Activated CD4-positive, alpha-beta memory T cell treated with anti-CD3 and anti-CD28 coated beads, Interleukin-2, amount 10 ng/mL, durations not matched to agents 7 days and 5 days (primary cell): ENCODE measurements at regions of chr19 and their contacts with region 1.

Region 1: GRCh38 chr19:55080968-55081772 is 5.5 kb downstream of the EPS8L1 start:
- DNase-seq: peak; percentile 97
- H3K4me3 Mint-ChIP-seq: peak overlapping the region; percentile 77
- H3K27ac Mint-ChIP-seq: peak overlapping the region; percentile 84
- H3K4me1 Mint-ChIP-seq: peaks cover 36% of the 10 kb centered on the region
- H3K27me3 Mint-ChIP-seq: peaks cover 43% of the 10 kb centered on the region

Region 2: GRCh38 chr19:55041617-55042349 is 39.4 kb before region 1 on chr19:
- CTCF ChIA-PET with region 1: no interaction called
- POLR2A ChIA-PET with region 1: no interaction called
- DNase-seq: peak; percentile 56
- H3K4me3 Mint-ChIP-seq: peak overlapping the region; percentile 64
- H3K27ac Mint-ChIP-seq: peak overlapping the region; percentile 94
- H3K4me1 Mint-ChIP-seq: peaks cover 25% of the 10 kb centered on the region
- H3K27me3 Mint-ChIP-seq: no peaks in the 10 kb centered on the region

Region 3: DNA sequence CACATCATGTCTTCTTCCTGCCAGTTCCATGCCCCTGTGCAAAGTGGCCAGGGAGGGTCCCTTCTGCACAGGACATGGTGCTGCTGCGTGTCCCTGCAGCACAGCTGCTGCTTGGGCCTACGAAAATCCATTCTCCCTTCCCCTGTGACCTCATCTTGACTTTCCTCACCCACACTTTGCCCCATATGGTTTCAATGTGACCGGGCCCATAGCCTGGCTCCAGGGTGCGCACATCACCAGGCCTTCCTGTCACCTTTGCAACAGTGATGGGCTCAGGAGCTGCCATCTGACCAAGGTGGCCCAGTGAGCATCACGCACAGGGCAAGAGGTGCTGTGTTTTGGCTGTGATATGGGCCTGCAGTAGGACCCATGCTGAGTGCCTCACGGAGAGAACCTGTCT is 25.4 kb after region 1 on chr19:
- CTCF ChIA-PET with region 1: no interaction called
- POLR2A ChIA-PET with region 1: no interaction called
- DNase-seq: no peak
- H3K4me3 Mint-ChIP-seq: no peak overlapping the region
- H3K27ac Mint-ChIP-seq: peak overlapping the region; percentile 29
- H3K4me1 Mint-ChIP-seq: peaks cover 4% of the 10 kb centered on the region
- H3K27me3 Mint-ChIP-seq: no peaks in the 10 kb centered on the region

Region 4: DNA sequence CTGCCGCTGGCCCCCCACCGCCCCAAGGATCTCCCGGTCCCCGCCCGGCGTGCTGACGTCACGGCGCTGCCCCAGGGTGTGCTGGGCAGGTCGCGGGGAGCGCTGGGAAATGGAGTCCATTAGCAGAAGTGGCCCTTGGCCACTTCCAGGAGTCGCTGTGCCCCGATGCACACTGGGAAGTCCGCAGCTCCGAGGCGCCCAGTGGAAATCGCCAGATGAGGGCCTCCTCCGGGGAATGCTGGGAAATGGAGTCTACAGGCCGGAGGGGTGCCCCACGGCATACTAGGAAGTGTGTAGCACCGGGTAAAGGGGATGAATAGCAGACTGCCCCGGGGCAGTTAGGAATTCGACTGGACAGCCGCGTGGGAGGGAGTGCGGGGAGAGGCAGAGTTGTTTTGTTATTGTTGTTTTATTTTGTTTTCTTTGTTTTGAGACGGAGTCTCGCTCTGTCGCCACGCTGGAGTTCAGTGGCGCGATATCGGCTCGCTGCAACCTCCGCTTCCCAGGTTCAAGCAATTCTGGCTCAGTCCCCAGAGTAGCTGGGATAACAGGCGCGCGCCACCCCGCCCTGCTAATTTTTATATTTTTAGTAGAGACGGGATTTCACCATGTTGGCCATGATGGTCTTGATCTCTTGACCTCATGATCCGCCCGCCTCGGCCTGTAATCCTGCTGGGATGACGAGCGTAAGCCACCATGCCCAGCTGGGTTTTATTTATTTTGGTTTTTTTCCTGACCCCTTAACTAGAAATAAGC is 36.6 kb after region 1 on chr19 and contains the start of gene PPP1R12C:
- CTCF ChIA-PET with region 1: no interaction called
- POLR2A ChIA-PET with region 1: interaction called, 15 read pairs
- DNase-seq: peak; percentile 98
- H3K4me3 Mint-ChIP-seq: peak within 1 kb of the TSS; percentile 93
- H3K27ac Mint-ChIP-seq: peak within 1 kb of the TSS; percentile 91
- H3K4me1 Mint-ChIP-seq: peaks cover 46% of the 10 kb centered on the region
- H3K27me3 Mint-ChIP-seq: peaks cover 9% of the 10 kb centered on the region
- total RNA-seq, gene PPP1R12C: 132 to 134 TPM

Region 5: GRCh38 chr19:55447421-55448174 is 366.4 kb after region 1 on chr19:
- CTCF ChIA-PET with region 1: no interaction called
- POLR2A ChIA-PET with region 1: no interaction called
- DNase-seq: no peak
- H3K4me3 Mint-ChIP-seq: no peak overlapping the region
- H3K27ac Mint-ChIP-seq: no peak overlapping the region
- H3K4me1 Mint-ChIP-seq: peaks cover 2% of the 10 kb centered on the region
- H3K27me3 Mint-ChIP-seq: peaks cover 45% of the 10 kb centered on the region